Aorta (tissue), 5 donors: ENCODE measurements at regions of chr7 and their contacts with region 1.

Region 1: DNA sequence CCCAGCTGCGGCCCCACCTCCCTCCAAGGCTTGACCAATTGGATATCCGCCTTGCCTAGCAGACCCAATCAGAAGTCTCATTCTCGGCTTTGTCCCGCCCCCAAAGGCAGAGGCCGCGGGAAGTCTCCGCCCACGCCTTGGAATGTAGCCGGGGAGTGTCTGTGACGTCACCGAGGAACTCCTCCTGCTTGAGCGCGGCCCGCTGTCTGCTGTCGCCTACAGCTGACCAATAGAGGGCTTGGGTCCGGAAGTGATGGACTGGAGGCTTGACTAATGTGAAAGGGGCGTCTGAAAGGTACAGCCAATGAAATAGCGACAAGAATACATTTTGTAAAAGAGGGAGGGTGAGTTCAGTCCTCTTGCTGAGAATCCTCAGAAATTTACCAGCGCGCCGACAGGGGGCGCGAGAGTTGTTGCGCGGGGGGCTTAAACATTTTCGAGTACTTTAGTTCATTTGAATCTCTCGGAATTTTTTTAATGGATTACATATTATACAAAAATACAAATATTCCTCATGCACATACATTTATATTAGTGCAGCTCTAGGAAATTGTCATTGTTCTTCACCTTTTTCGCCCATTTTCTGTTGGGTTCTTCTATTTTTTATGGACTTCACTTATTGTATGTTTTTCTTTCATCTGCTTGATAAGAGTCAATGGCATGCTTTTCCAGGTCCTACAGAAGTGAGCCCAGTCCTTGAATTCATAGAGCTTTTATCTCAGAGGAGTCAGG is 376 bp upstream of the CREB3L2 start:
- DNase-seq: peak; percentile 99
- ATAC-seq: peak; percentile 97
- H3K4me3 ChIP-seq: peak overlapping the region in 1 of 2 donors; percentile 99
- H3K27ac ChIP-seq: peak overlapping the region in 1 of 2 donors; percentile 96
- H3K4me1 ChIP-seq: peaks cover 0 to 4% of the 10 kb centered on the region in 2 donors
- H3K27me3 ChIP-seq: no peaks in the 10 kb centered on the region

Region 2: DNA sequence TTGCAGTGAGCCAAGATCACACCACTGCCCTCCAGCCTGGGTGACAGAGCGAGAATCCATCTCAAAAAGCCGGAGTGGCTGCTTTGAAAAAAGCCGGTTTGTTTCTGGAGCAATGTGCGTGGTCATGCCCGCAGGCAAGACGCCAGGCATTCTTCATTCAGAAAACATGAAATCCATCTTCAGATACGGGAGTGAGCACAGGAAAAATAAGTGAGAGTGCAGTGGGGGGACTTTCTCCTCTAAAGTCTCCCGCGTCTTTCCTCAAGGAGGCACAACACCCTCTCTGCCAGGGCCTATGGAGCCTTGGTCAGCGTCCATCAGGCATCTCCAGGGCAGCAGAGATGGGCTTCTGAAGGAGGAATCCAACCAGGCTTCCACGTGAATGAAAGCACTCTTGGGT is 93.2 kb before region 1 on chr7:
- intact Hi-C with region 1: loop called in 1 of 2 experiments (anchors 2 kb)
- DNase-seq: peak; percentile 75 to 88
- ATAC-seq: peak; percentile 58
- H3K4me3 ChIP-seq: no peak overlapping the region
- H3K27ac ChIP-seq: peak overlapping the region in 1 of 2 donors; percentile 88
- H3K4me1 ChIP-seq: no peaks in the 10 kb centered on the region
- H3K27me3 ChIP-seq: no peaks in the 10 kb centered on the region

Region 3: GRCh38 chr7:137967143-137968018 is 34.9 kb before region 1 on chr7:
- intact Hi-C with region 1: loop called in 1 of 2 experiments (anchors 5 kb)
- DNase-seq: no peak
- ATAC-seq: peak; percentile 51
- H3K4me3 ChIP-seq: no peak overlapping the region
- H3K27ac ChIP-seq: peak overlapping the region; percentile 93 to 94
- H3K4me1 ChIP-seq: peaks cover 4 to 7% of the 10 kb centered on the region in 2 donors
- H3K27me3 ChIP-seq: no peaks in the 10 kb centered on the region